Activated CD4-positive, alpha-beta T cell treated with anti-CD3 and anti-CD28 coated beads, Interleukin-2, amount 10 ng/mL, durations not matched to agents 24 days and 14 days (primary cell): ENCODE measurements at regions of chr5 and their contacts with region 1.

Region 1: GRCh38 chr5:110738812-110739651 is at the start of gene SLC25A46:
- DNase-seq: peak; percentile 97
- H3K4me3 Mint-ChIP-seq: peak within 1 kb of the TSS; percentile 97
- H3K27ac Mint-ChIP-seq: peak within 1 kb of the TSS; percentile 96
- H3K4me1 Mint-ChIP-seq: peaks cover 24% of the 10 kb centered on the region
- H3K27me3 Mint-ChIP-seq: peaks cover 14% of the 10 kb centered on the region
- total RNA-seq, gene SLC25A46: 47.0 and 49.4 TPM in 2 replicates

Region 2: DNA sequence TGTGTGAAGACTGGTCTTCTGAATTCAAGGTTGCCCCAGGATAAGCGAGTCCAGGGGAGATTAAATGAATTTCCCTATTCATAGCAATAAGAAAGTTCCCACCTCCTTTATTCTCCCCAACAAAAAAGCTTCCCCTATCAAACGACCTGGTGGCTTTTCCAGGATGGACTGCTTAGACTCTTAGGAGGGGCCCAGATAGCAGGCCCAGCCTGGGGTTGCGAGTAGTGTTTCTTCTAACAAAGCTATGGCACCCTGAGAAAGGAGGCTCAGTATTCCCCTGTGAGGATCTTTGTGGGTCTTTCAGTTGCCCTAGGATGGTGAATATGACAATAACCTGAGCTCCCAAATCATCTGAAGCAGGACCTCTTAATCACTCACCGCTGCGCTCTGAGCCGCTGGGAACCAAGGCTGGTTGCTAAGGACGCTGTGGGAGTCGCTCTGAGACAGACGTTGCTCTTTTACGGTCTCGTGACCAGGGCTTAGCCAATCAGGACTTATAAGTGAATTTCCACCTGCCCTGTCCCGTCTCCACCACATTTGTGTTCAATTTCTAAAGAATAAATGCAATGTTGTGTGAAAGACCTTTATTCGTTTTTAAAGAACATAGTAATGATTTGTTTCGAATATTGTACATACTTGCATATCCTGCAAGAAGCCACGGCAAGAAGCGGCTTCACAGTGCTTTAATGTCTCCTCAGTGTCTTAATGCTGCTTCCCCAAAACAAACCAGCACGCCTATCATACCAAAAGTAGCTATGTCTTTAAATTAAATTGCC is 12.6 kb before region 1 on chr5 and contains the start of gene TMEM232:
- intact Hi-C with region 1: loop called (anchors 1 kb)
- DNase-seq: peak; percentile 90
- H3K4me3 Mint-ChIP-seq: peak within 1 kb of the TSS; percentile 86
- H3K27ac Mint-ChIP-seq: peak within 1 kb of the TSS; percentile 74
- H3K4me1 Mint-ChIP-seq: peaks cover 6% of the 10 kb centered on the region
- H3K27me3 Mint-ChIP-seq: no peaks in the 10 kb centered on the region
- total RNA-seq, gene TMEM232: 1.6 TPM in 2 replicates

Region 3: GRCh38 chr5:110751902-110752762 is 13.1 kb after region 1 on chr5:
- intact Hi-C with region 1: loop called (anchors 1 kb)
- DNase-seq: peak; percentile 85
- H3K4me3 Mint-ChIP-seq: peak overlapping the region; percentile 62
- H3K27ac Mint-ChIP-seq: peak overlapping the region; percentile 93
- H3K4me1 Mint-ChIP-seq: peaks cover 42% of the 10 kb centered on the region
- H3K27me3 Mint-ChIP-seq: no peaks in the 10 kb centered on the region

Region 4: DNA sequence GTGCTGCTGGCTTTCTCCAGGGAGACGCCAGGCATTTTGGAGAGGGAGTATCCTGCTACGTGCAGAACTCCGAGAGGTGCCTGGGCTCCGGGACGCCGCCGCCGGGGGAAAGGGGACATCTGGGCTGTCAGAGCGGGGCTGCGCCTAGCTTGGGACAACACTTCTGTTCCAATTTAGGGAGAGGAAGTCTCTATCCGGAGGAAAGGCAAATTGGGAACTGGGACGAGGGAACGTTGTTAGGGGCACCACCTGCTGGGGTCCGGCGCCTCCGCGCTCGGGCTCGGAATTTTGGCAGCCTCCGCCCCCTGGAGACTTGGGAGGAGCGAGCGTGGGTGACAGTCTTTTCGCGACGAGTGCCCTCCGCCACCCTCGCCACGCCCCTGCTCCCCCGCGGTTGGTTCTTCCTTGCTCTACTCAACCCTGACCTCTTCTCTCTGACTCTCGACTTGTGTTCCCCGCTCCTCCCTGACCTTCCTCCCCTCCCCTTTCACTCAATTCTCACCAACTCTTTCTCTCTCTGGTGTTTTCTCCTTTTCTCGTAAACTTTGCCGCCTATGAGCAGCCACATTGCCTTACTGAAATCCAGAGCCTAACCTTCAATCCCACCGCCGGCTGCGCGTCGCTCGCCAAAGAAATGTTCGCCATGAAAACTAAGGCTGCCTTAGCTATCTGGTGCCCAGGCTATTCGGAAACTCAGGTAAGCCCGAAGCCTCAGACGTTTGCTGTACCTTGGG is 334.1 kb after region 1 on chr5:
- intact Hi-C with region 1: loop called (anchors 5 kb)
- DNase-seq: peak; percentile 88
- H3K4me3 Mint-ChIP-seq: peak overlapping the region; percentile 93
- H3K27ac Mint-ChIP-seq: no peak overlapping the region
- H3K4me1 Mint-ChIP-seq: peaks cover 22% of the 10 kb centered on the region
- H3K27me3 Mint-ChIP-seq: peaks cover 71% of the 10 kb centered on the region

Region 5: DNA sequence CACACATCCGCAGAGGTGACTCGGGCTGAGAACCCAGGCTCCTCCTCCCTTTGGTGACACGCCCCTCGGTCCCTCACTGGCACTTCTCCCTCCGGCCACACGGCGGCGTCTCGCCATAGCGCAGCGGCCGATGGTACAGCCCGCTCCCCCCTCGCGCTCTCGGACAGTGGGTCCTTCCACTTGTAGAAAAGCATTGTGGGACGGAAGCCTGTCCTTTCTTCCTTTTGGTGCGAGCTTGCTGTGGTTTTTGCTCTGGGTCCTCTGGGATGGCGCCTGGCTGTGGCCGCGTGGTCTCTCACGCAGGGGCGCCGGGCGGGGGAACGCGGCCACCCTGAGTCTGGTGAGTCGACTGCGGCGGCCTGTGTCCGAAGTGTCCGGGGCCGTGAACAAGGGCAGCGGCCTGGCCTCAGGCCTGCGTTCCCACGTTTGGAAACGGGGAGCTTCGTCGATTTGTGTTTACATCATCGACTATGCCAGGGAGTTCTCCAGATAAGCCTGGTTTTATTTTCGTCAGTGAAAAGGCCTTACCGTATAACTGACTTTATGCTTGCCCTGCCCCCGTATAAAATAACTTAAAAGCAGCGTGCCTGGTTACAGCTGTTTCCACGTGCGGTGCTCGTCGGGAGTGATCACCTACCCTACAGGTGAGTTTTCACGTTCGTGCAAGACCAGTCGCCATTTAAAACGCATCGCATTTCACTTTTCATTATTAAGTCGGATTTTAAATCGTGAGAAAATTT is 1421.8 kb after region 1 on chr5:
- intact Hi-C with region 1: loop called (anchors 2 kb)
- DNase-seq: peak; percentile 98
- H3K4me3 Mint-ChIP-seq: peak overlapping the region; percentile 96
- H3K27ac Mint-ChIP-seq: peak overlapping the region; percentile 94
- H3K4me1 Mint-ChIP-seq: peaks cover 25% of the 10 kb centered on the region
- H3K27me3 Mint-ChIP-seq: peaks cover 2% of the 10 kb centered on the region